Activated CD4-positive, alpha-beta T cell treated with anti-CD3 and anti-CD28 coated beads for 36 hours (primary cell): ENCODE measurements at regions of chr2 and their contacts with region 1.

Region 1: GRCh38 chr2:154170400-154170799 is 298.7 kb downstream of the GALNT13 start:
- DNase-seq: no peak
- ATAC-seq: no peak
- H3K4me3 Mint-ChIP-seq: no peak overlapping the region
- H3K27ac Mint-ChIP-seq: no peak overlapping the region
- H3K4me1 Mint-ChIP-seq: no peaks in the 10 kb centered on the region
- H3K27me3 Mint-ChIP-seq: no peaks in the 10 kb centered on the region

Region 2: GRCh38 chr2:153912798-153913396 is 257.5 kb before region 1 on chr2:
- CTCF ChIA-PET with region 1: no interaction called
- POLR2A ChIA-PET with region 1: no interaction called
- intact Hi-C with region 1: no loop called
- DNase-seq: no peak
- ATAC-seq: no peak
- H3K4me3 Mint-ChIP-seq: no peak overlapping the region
- H3K27ac Mint-ChIP-seq: no peak overlapping the region
- H3K4me1 Mint-ChIP-seq: no peaks in the 10 kb centered on the region
- H3K27me3 Mint-ChIP-seq: no peaks in the 10 kb centered on the region

Region 3: GRCh38 chr2:154049561-154049960 is 120.8 kb before region 1 on chr2:
- CTCF ChIA-PET with region 1: no interaction called
- POLR2A ChIA-PET with region 1: no interaction called
- intact Hi-C with region 1: no loop called
- DNase-seq: no peak
- ATAC-seq: no peak
- H3K4me3 Mint-ChIP-seq: no peak overlapping the region
- H3K27ac Mint-ChIP-seq: no peak overlapping the region
- H3K4me1 Mint-ChIP-seq: no peaks in the 10 kb centered on the region
- H3K27me3 Mint-ChIP-seq: no peaks in the 10 kb centered on the region

Region 4: DNA sequence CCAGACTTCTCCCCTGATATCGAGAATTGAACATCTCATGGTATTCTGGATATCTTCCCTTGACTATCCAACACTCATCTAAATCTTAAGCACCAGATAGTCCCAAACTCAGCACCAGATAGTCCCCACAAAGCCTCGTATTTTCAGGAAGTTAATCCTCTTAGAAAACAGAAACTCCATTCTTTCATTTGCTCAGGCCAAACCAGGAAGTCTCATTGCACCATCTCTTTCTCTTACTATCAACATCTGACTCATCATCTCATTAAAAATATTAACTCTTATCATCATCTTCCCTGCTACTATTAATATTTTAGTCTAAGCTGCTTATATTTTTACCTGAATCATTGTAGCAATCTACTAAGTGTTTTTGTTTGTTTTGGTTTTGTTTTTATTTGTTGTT is 12.3 kb before region 1 on chr2:
- CTCF ChIA-PET with region 1: no interaction called
- POLR2A ChIA-PET with region 1: no interaction called
- intact Hi-C with region 1: loop called in 1 of 2 experiments (anchors 1 kb)
- DNase-seq: no peak
- ATAC-seq: no peak
- H3K4me3 Mint-ChIP-seq: no peak overlapping the region
- H3K27ac Mint-ChIP-seq: no peak overlapping the region
- H3K4me1 Mint-ChIP-seq: no peaks in the 10 kb centered on the region
- H3K27me3 Mint-ChIP-seq: no peaks in the 10 kb centered on the region

Region 5: DNA sequence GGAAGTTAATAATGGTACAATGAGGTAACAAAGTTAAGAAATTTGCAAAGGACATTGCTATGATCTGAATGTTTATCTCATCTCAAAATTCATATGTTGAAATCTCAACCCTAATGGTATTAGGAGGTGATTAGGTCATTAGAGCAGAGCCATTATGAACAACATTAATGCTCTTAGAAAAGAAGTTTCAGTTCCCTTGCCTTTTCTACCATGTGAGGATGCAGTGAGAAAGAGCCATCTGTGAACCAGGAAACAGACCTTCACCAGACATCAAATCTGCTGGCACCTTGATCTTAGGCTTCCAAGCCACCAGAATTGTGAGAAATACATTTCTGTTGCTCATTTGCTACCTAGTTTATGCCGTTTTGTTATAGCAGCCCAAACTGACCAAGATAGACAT is 1404.5 kb after region 1 on chr2:
- CTCF ChIA-PET with region 1: no interaction called
- POLR2A ChIA-PET with region 1: no interaction called
- intact Hi-C with region 1: no loop called
- DNase-seq: no peak
- ATAC-seq: no peak
- H3K4me3 Mint-ChIP-seq: no peak overlapping the region
- H3K27ac Mint-ChIP-seq: no peak overlapping the region
- H3K4me1 Mint-ChIP-seq: no peaks in the 10 kb centered on the region
- H3K27me3 Mint-ChIP-seq: no peaks in the 10 kb centered on the region